ENCODE measurements at regions of chr3 and their contacts with region 1.

Region 1: GRCh38 chr3:89699771-89700170 is 592.4 kb downstream of the EPHA3 start:
- DNase-seq: no peak
- H3K4me3 ChIP-seq: no peak overlapping the region
- H3K27ac ChIP-seq: no peak overlapping the region
- H3K4me1 ChIP-seq: no peaks in the 10 kb centered on the region
- CTCF ChIP-seq: 0 out of 2 replicates have a peak, but pooled peaks have one; percentile 41

Region 2: DNA sequence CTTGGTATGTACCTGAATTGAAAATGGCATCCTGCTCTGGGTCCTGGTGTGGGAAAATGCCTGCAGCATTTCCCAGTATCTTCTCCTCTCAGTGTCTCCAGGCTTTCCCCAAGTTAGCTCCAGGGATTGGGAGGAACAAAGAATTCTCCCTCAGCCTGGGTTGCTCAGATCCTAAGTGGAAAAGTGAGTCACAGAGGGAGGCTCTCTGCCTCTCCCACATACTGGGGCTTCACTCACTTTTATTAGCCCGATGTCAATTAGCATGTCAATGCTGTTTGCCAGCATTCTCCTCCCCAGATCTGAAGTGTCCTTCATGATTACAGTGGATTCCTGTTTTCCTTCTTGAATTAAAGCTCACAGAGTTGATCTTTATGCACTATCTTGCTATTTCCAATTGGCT is 62.6 kb after region 1 on chr3:
- CTCF ChIA-PET with region 1: no interaction called
- POLR2A ChIA-PET with region 1: no interaction called
- intact Hi-C with region 1: loop called (anchors 10 kb)
- DNase-seq: no peak
- H3K4me3 ChIP-seq: no peak overlapping the region
- H3K27ac ChIP-seq: no peak overlapping the region
- H3K4me1 ChIP-seq: no peaks in the 10 kb centered on the region
- CTCF ChIP-seq: no peak

Region 3: GRCh38 chr3:89923921-89924610 is 224.3 kb after region 1 on chr3:
- CTCF ChIA-PET with region 1: no interaction called
- POLR2A ChIA-PET with region 1: no interaction called
- intact Hi-C with region 1: no loop called
- DNase-seq: no peak
- H3K4me3 ChIP-seq: no peak overlapping the region
- H3K27ac ChIP-seq: no peak overlapping the region
- H3K4me1 ChIP-seq: no peaks in the 10 kb centered on the region
- CTCF ChIP-seq: no peak

Measured in OCI-LY7 (cell line).